ENCODE measurements at regions of chr17 and their contacts with region 1.

Region 1: DNA sequence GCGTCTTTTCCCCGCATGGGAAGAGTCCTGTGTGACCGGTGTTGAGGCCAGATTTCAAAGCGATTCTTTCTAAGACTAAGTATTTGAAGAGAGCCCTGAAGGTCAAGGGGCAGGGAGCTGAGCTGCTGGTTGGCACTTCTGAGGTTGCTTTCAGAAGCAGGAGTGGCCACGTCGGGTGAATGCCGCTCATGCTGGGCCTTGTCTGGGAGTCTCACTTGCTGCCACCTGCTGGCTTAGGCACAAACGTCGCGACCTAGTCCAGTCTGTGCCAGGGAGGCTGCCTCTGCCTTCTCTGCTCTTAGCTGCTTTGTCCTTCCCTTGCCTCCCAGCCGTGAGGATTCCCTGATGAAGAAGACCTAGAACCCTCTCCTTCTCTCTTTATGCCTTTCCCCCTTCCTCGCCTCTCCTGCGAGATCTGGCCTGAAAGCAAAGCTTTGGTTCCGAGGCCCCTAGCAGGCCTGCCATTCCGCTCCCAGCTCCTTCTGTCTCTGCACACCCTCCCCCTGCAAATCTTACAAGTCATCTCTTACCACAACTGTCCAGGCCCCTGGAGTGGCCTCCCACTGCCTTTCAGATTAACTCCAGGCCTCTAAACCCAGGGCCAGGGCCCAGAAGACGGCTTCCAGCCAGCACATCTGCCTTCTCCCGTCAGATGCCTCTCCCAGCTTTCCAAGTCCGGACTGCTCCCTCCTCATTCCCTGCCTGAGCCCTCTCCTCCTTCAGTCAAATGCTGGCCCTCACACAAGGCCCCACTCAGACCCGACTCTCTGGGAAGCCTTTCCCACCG is 11.4 kb downstream of the CTNS start:
- DNase-seq: peak; percentile 28
- H3K4me3 ChIP-seq: no peak overlapping the region
- H3K27ac ChIP-seq: no peak overlapping the region
- H3K4me1 ChIP-seq: no peaks in the 10 kb centered on the region
- H3K27me3 ChIP-seq: no peaks in the 10 kb centered on the region
- CTCF ChIP-seq: peak; percentile 31 to 62

Region 2: DNA sequence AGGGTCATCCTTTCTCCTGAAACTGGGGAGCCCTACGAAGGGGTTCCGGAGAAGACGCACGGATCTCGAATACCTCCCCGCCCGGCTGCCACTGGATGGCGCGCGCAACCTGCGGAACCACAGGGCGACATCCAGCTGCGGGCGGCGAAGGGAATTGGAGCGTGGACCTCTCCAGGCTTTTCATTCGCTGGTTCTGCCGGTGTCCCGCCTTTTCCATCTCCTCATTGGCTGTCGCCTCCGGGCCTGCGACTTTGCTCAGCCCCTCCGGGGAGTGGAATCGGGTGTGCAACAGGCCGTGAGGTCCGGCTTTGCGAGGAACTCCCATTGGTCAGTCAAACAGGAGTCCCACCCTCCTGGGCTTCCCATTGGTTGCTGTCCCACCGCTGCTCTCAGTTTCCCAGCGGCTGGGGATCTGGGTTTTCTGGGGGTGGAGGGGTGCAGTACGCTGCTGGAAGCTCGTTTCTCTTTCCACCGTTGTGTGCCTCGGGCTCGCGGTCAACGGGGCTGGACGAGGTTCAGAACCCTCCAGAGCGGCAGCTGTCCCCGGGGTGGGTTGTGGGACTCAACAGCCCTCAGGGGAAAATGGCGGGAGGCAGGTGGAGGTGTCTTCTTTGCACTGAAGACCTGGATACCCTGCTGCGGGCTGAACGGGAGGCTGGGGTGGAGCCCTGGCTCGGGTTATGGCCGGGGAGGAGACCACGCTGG is 599.0 kb before region 1 on chr17:
- CTCF ChIA-PET with region 1: no interaction called
- dilution Hi-C with region 1: loop called (anchors 10 kb)
- in situ Hi-C with region 1: loop called (anchors 10 to 25 kb)
- intact Hi-C with region 1: no loop called
- DNase-seq: peak; percentile 96
- H3K4me3 ChIP-seq: peak overlapping the region; percentile 84 to 89 (median 86)
- H3K27ac ChIP-seq: peak overlapping the region; percentile 3
- H3K4me1 ChIP-seq: peaks cover 10% of the 10 kb centered on the region
- H3K27me3 ChIP-seq: no peaks in the 10 kb centered on the region
- CTCF ChIP-seq: peak; percentile 66 to 90

Region 3: DNA sequence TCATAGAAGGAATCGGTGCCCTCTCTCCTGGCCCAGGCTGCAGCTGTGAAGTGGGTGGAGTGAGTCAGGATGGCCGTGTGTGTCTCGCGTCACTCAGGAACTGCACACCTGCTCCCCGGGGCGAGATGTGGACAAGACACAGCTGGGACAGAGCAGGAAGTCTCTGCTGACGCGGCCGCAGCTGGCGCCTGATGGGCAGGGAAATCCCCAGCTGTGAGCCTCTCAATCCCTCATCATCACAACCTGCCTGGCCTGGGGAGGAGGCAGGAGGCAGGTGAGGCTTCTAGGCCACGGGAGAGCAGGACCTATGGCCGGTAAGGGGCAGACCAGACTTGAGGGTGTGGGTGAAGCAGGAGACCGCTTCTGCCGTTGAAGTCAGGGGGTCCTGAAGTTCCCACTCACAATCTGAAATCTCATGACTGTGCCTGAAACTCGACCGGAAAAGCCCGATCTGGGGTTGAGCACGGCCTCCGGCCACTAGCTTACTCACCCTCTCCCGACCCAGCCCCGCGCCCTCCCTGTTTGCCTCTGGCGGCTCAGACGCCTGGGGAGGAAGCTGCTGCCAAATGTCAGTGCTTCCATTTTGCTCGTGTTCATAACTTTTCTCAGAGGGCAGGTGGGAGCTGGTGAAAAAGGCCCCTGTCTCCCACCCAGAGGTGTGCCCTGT is 89.2 kb before region 1 on chr17:
- CTCF ChIA-PET with region 1: no interaction called
- dilution Hi-C with region 1: loop called (anchors 5 kb)
- in situ Hi-C with region 1: no loop called
- intact Hi-C with region 1: no loop called
- DNase-seq: peak; percentile 98
- H3K4me3 ChIP-seq: no peak overlapping the region
- H3K27ac ChIP-seq: peak overlapping the region; percentile 93
- H3K4me1 ChIP-seq: peaks cover 34% of the 10 kb centered on the region
- H3K27me3 ChIP-seq: no peaks in the 10 kb centered on the region
- CTCF ChIP-seq: no peak

Region 4: GRCh38 chr17:3704931-3705717 is 57.2 kb after region 1 on chr17:
- CTCF ChIA-PET with region 1: no interaction called
- dilution Hi-C with region 1: loop called (anchors 5 kb)
- in situ Hi-C with region 1: no loop called
- intact Hi-C with region 1: no loop called
- DNase-seq: no peak
- H3K4me3 ChIP-seq: no peak overlapping the region
- H3K27ac ChIP-seq: no peak overlapping the region
- H3K4me1 ChIP-seq: no peaks in the 10 kb centered on the region
- H3K27me3 ChIP-seq: no peaks in the 10 kb centered on the region
- CTCF ChIP-seq: no peak

Region 5: GRCh38 chr17:3754458-3755334 is 106.7 kb after region 1 on chr17:
- CTCF ChIA-PET with region 1: no interaction called
- dilution Hi-C with region 1: no loop called
- in situ Hi-C with region 1: no loop called
- intact Hi-C with region 1: no loop called
- DNase-seq: peak; percentile 96
- H3K4me3 ChIP-seq: peak overlapping the region; percentile 61 to 89 (median 80)
- H3K27ac ChIP-seq: peak overlapping the region; percentile 15
- H3K4me1 ChIP-seq: peaks cover 9% of the 10 kb centered on the region
- H3K27me3 ChIP-seq: no peaks in the 10 kb centered on the region
- CTCF ChIP-seq: no peak